GM12878 (cell line): ENCODE measurements at regions of chr10 and their contacts with region 1.

Region 1: GRCh38 chr10:5818894-5819293 is 5.7 kb upstream of the GDI2 start:
- DNase-seq: no peak
- ATAC-seq: peak; percentile 50
- H3K4me3 ChIP-seq: no peak overlapping the region
- H3K27ac ChIP-seq: peak overlapping the region; percentile 56; the same call in 1 of the 2 replicates
- H3K4me1 ChIP-seq: peaks cover 59% of the 10 kb centered on the region
- H3K27me3 ChIP-seq: no peaks in the 10 kb centered on the region
- CTCF ChIP-seq: no peak
- EP300 ChIP-seq: no peak
- POLR2A ChIP-seq: no peak
- RAD21 ChIP-seq: no peak

Region 2: GRCh38 chr10:5732141-5732540 is 86.8 kb before region 1 on chr10:
- CTCF ChIA-PET with region 1: no interaction called
- POLR2A ChIA-PET with region 1: no interaction called
- RAD21 ChIA-PET with region 1: no interaction called
- SMC1A ChIA-PET with region 1: no interaction called
- in situ Hi-C with region 1: no loop called
- intact Hi-C with region 1: no loop called
- DNase-seq: no peak
- ATAC-seq: no peak
- H3K4me3 ChIP-seq: no peak overlapping the region
- H3K27ac ChIP-seq: no peak overlapping the region
- H3K4me1 ChIP-seq: no peaks in the 10 kb centered on the region
- H3K27me3 ChIP-seq: no peaks in the 10 kb centered on the region
- CTCF ChIP-seq: no peak
- EP300 ChIP-seq: no peak
- POLR2A ChIP-seq: no peak
- RAD21 ChIP-seq: no peak

Region 3: DNA sequence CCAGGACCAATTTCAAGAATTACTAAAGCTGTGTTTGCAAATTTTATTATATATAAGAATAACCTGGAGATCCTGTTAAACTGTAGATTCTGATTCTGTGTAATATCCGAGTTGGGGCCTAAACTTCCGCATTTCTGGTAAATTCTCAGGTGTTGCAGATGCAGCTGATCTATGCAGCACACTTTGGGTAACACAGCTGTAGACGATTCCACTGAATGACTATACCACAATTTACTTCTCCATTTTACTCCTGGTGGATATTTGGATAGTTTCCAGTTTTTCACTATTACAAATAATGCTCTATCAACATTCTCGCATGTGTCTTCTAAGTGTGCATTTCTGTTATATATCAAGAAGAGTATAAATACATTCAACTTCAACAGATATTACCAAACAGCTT is 13.2 kb before region 1 on chr10:
- CTCF ChIA-PET with region 1: interaction called, 4 read pairs
- POLR2A ChIA-PET with region 1: interaction called, 6 read pairs
- RAD21 ChIA-PET with region 1: interaction called, 33 read pairs
- SMC1A ChIA-PET with region 1: interaction called, 10 read pairs
- in situ Hi-C with region 1: no loop called
- intact Hi-C with region 1: no loop called
- DNase-seq: no peak
- ATAC-seq: no peak
- H3K4me3 ChIP-seq: no peak overlapping the region
- H3K27ac ChIP-seq: no peak overlapping the region
- H3K4me1 ChIP-seq: peaks cover 8% of the 10 kb centered on the region
- H3K27me3 ChIP-seq: no peaks in the 10 kb centered on the region
- CTCF ChIP-seq: no peak
- EP300 ChIP-seq: no peak
- POLR2A ChIP-seq: no peak
- RAD21 ChIP-seq: no peak

Region 4: DNA sequence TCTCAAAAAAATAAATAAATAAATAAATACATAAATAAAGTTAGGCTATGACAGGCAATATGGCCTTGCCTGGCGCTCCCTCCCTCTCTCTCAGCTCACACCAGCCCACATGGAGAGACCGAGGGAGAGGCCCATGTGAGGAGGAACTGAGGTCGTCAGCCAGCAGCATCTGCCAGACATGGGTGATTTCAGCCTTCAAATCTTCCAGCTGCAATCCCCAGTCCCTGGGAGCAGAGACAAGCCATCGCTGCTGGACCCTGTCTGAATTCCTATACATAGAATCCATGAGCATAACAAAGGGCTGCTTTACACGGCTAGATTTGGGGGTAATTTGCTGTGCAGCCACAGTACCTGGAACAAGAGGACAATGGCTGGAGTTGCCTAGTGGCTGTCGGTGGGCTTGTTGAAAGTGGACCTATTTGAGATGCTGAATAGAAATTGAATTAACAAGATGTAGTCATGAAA is 35.2 kb after region 1 on chr10:
- CTCF ChIA-PET with region 1: interaction called, 10 read pairs
- POLR2A ChIA-PET with region 1: interaction called, 8 read pairs
- RAD21 ChIA-PET with region 1: interaction called, 19 read pairs
- SMC1A ChIA-PET with region 1: interaction called, 23 read pairs
- in situ Hi-C with region 1: no loop called
- intact Hi-C with region 1: no loop called
- DNase-seq: no peak
- ATAC-seq: no peak
- H3K4me3 ChIP-seq: no peak overlapping the region
- H3K27ac ChIP-seq: no peak overlapping the region
- H3K4me1 ChIP-seq: peaks cover 8% of the 10 kb centered on the region
- H3K27me3 ChIP-seq: no peaks in the 10 kb centered on the region; a peak in 1 of 4 replicates
- CTCF ChIP-seq: no peak
- EP300 ChIP-seq: no peak
- POLR2A ChIP-seq: no peak
- RAD21 ChIP-seq: no peak

Region 5: DNA sequence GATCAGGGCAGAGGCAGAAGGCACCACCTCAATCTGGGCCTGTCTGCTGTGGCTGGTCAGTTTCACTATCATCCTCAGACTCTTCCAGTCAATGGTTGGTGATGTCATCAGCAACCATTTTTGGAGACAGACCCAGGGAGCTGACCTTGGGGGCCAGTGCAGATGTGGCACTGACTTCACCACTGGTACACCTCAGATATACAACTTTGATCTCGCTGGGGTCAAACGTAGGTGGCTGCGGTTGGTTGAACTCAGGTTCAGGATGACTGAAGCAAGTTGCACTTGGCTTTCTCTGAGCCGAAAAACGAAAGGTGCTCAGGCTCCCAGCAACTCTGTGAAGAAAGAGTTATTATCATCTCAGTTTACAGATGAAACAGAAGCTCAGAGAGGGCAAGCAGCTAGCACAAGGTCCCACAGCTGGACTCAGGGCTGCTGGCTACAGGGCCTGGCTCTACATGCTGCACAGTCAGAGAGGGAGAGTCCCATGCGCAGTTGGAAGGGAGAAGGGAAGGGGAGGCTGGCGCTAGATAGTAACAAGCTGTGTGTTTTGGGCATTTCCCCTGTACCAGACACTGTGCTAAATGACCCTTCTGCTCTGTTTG is 43.6 kb after region 1 on chr10:
- CTCF ChIA-PET with region 1: interaction called, 21 read pairs
- POLR2A ChIA-PET with region 1: interaction called, 19 read pairs
- RAD21 ChIA-PET with region 1: interaction called, 25 read pairs
- SMC1A ChIA-PET with region 1: interaction called, 23 read pairs
- in situ Hi-C with region 1: no loop called
- intact Hi-C with region 1: no loop called
- DNase-seq: peak; percentile 94
- ATAC-seq: peak; percentile 96
- H3K4me3 ChIP-seq: peak overlapping the region; percentile 34
- H3K27ac ChIP-seq: peak overlapping the region; percentile 73
- H3K4me1 ChIP-seq: peaks cover 20% of the 10 kb centered on the region
- H3K27me3 ChIP-seq: no peaks in the 10 kb centered on the region
- CTCF ChIP-seq: no peak
- EP300 ChIP-seq: peak; percentile 74 to 88; a peak in 2 of 4 replicates
- POLR2A ChIP-seq: peak; percentile 46; the same call in 1 of the 2 replicates
- RAD21 ChIP-seq: no peak

Region 6: DNA sequence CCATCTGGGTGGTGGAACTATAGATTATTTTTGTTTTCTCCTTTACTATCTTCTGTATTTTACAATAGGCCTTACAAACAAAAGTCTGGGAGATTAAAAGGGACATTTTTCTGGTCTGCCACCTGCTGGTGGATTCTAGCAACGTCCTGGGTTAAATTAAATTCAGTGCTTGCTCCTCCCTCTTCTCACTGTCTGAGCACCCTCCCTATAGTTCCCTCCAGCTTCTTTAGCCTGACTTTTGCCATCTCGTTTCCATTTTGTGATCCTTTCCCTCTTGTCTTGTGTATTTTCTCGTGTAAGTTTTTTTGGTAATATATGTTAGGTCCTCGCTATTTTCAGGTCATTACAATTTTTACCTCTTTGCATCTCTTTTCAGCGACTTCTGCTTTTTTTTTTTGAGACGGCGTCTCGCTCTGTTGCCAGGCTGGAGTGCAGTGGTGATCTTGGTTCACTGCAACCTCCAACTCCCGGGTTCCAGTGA is 54.7 kb after region 1 on chr10:
- CTCF ChIA-PET with region 1: interaction called, 18 read pairs
- POLR2A ChIA-PET with region 1: interaction called, 6 read pairs
- RAD21 ChIA-PET with region 1: interaction called, 9 read pairs
- SMC1A ChIA-PET with region 1: interaction called, 9 read pairs
- in situ Hi-C with region 1: no loop called
- intact Hi-C with region 1: no loop called
- DNase-seq: peak; percentile 59
- ATAC-seq: peak; percentile 98
- H3K4me3 ChIP-seq: peak overlapping the region; percentile 26; the same call in 1 of the 2 replicates
- H3K27ac ChIP-seq: 0 out of 2 replicates have a peak overlapping the region, but pooled peaks have one; percentile 18
- H3K4me1 ChIP-seq: peaks cover 3% of the 10 kb centered on the region
- H3K27me3 ChIP-seq: no peaks in the 10 kb centered on the region
- CTCF ChIP-seq: peak; percentile 64 to 73 (median 66)
- EP300 ChIP-seq: no peak
- POLR2A ChIP-seq: no peak
- RAD21 ChIP-seq: peak; percentile 71

Region 7: DNA sequence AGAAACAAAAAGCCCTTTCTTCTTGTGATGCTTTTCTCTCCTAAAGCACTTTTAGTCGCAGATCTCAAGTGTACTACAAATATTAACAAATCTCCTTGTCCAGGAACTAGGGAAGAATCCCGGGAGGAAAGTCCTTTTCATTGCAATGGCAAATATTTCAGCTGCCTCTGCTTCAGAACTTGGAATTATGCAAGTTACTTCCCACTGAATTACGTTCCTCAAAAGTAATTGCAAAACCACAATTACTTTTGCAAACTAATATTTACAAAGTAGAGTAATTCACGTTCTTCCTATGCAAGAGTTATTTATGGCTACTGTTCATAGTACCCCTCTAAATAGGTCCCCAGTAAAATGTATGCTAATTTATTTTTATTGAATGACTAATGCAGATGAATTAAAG is 746.7 kb after region 1 on chr10:
- CTCF ChIA-PET with region 1: no interaction called
- POLR2A ChIA-PET with region 1: no interaction called
- RAD21 ChIA-PET with region 1: no interaction called
- SMC1A ChIA-PET with region 1: no interaction called
- in situ Hi-C with region 1: no loop called
- intact Hi-C with region 1: no loop called
- DNase-seq: no peak
- ATAC-seq: no peak
- H3K4me3 ChIP-seq: no peak overlapping the region
- H3K27ac ChIP-seq: no peak overlapping the region
- H3K4me1 ChIP-seq: no peaks in the 10 kb centered on the region
- H3K27me3 ChIP-seq: peaks cover 0 to 6% of the 10 kb centered on the region in 2 experiments
- CTCF ChIP-seq: no peak
- EP300 ChIP-seq: no peak
- POLR2A ChIP-seq: no peak
- RAD21 ChIP-seq: no peak